Common myeloid progenitor, CD34-positive (primary cell): ENCODE measurements at regions of chr1 and their contacts with region 1.

Region 1: GRCh38 chr1:158022554-158023278 is 29.3 kb downstream of the KIRREL1 start:
- DNase-seq: no peak
- H3K4me3 ChIP-seq: no peak overlapping the region
- H3K27ac ChIP-seq: no peak overlapping the region
- H3K4me1 ChIP-seq: peaks cover 0 to 3% (median 0%) of the 10 kb centered on the region in 4 experiments
- H3K27me3 ChIP-seq: no peaks in the 10 kb centered on the region

Region 2: GRCh38 chr1:157870490-157870889 is 152.2 kb before region 1 on chr1:
- CTCF ChIA-PET with region 1: no interaction called
- POLR2A ChIA-PET with region 1: no interaction called
- DNase-seq: peak in 2 of 3 donors; percentile 33 to 36
- H3K4me3 ChIP-seq: no peak overlapping the region
- H3K27ac ChIP-seq: no peak overlapping the region
- H3K4me1 ChIP-seq: no peaks in the 10 kb centered on the region
- H3K27me3 ChIP-seq: no peaks in the 10 kb centered on the region

Region 3: GRCh38 chr1:157925419-157926166 is 97.1 kb before region 1 on chr1:
- CTCF ChIA-PET with region 1: no interaction called
- POLR2A ChIA-PET with region 1: no interaction called
- DNase-seq: no peak
- H3K4me3 ChIP-seq: no peak overlapping the region
- H3K27ac ChIP-seq: no peak overlapping the region
- H3K4me1 ChIP-seq: peaks cover 0 to 3% (median 0%) of the 10 kb centered on the region in 4 experiments
- H3K27me3 ChIP-seq: no peaks in the 10 kb centered on the region

Region 4: GRCh38 chr1:158035976-158036583 is 13.4 kb after region 1 on chr1:
- CTCF ChIA-PET with region 1: interaction called, 19 read pairs
- POLR2A ChIA-PET with region 1: no interaction called
- DNase-seq: peak; percentile 66 to 77 (median 66)
- H3K4me3 ChIP-seq: no peak overlapping the region
- H3K27ac ChIP-seq: no peak overlapping the region
- H3K4me1 ChIP-seq: peaks cover 0 to 8% (median 4%) of the 10 kb centered on the region in 4 experiments
- H3K27me3 ChIP-seq: no peaks in the 10 kb centered on the region